K562 (cell line): ENCODE measurements at regions of chr9 and their contacts with region 1.

Region 1: DNA sequence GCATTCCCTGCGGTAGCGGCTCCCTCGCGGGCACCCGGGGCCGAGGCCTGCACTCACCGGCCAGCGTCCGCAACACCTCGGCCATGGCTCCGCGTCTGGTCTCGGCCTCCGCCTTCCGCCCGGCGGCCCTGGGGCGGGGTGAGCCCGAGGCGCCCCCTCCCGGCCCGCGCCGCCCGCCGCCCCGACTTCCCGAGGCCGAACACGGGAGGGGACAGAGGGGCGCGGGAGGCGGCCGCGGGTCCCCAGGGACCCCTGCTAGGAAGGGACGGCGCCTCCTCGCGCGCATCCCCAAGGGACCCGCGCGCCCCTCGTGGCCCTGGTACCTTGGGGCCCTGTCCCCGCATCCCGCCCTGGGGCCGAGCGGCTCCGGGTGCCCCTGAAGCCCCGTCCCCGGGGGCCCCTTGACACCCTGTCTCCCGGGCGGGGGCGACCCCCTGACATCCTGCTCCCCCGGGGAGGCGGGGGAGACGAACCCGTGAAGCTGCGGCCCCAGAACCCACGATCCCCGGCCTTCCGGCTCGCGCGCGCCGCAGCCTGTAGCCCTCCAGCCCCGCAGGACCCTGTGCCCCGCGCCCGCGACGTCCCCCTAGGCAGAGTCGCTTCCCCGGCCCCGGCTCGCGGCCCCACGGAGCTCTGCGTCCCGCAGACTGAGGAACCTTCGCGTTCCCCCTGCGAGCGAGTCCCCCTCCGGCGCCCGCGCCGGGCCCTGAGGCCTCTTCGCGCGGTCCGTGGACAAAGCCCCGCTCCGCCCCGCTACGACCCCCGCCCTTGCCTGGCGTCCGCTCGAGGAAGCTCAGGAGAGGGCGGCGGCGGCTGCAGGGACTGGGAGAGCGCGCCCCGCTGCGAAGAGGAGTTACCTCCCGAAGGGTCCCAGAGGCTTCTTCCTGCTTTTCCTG is at the start of gene ABO:
- DNase-seq: peak; percentile 74 to 89 (median 85)
- ATAC-seq: peak; percentile 84
- H3K4me3 ChIP-seq: peak within 1 kb of the TSS; percentile 75
- H3K27ac ChIP-seq: peak within 1 kb of the TSS; percentile 84
- H3K4me1 ChIP-seq: peaks cover 41 to 42% of the 10 kb centered on the region in 2 experiments
- H3K27me3 ChIP-seq: no peaks in the 10 kb centered on the region
- CTCF ChIP-seq: peak; percentile 24 to 56 (median 45); a peak in 3 of 6 replicates
- EP300 ChIP-seq: no peak
- POLR2A ChIP-seq: peak; percentile 37; the same call in 1 of the 2 replicates
- RAD21 ChIP-seq: peak; percentile 25 to 63
- polyA plus RNA-seq, gene ABO: 16.9 to 21.9 TPM

Region 2: DNA sequence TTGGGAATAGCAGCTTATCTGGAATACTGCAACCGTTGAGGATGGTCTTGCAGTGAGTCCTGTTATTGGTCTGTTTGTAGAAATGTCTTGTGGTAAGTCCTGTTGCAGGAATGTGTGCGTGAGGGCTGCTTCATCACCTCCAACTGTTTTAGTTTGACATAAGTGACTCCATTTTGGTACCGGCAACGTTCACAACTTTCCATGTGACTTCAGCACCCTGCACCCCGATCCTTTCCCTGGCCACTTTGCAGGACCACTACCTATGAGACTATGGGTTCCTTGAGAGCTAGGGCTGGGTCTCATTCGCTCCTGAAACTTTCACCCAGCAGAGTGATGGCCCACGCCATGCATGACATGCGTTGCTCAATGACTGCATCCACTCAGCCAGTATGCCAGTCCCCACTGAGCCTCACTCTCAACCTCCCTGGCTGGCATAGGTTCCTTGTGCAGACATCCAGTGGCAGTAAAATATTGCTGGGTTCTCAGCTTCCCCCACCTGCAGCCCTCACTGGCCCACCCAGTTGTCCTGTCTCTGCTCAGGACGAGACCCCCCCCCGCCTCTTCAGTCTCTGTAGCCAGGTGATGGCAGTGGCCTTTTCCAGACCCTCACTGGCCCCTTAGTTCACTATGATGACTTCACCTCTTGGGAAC is 52.6 kb after region 1 on chr9:
- CTCF ChIA-PET with region 1: interaction called, 4 read pairs
- POLR2A ChIA-PET with region 1: interaction called, 4 read pairs
- in situ Hi-C with region 1: no loop called
- intact Hi-C with region 1: loop called (anchors 10 kb)
- DNase-seq: no peak
- ATAC-seq: no peak
- H3K4me3 ChIP-seq: no peak overlapping the region
- H3K27ac ChIP-seq: no peak overlapping the region
- H3K4me1 ChIP-seq: peaks cover 0 to 19% of the 10 kb centered on the region in 2 experiments; a peak in 2 of 5 replicates
- H3K27me3 ChIP-seq: peaks cover 0 to 8% of the 10 kb centered on the region in 2 experiments; a peak in 1 of 5 replicates
- CTCF ChIP-seq: no peak
- EP300 ChIP-seq: no peak
- POLR2A ChIP-seq: no peak
- RAD21 ChIP-seq: no peak